ENCODE measurements at regions of chr16 and their contacts with region 1.

Region 1: DNA sequence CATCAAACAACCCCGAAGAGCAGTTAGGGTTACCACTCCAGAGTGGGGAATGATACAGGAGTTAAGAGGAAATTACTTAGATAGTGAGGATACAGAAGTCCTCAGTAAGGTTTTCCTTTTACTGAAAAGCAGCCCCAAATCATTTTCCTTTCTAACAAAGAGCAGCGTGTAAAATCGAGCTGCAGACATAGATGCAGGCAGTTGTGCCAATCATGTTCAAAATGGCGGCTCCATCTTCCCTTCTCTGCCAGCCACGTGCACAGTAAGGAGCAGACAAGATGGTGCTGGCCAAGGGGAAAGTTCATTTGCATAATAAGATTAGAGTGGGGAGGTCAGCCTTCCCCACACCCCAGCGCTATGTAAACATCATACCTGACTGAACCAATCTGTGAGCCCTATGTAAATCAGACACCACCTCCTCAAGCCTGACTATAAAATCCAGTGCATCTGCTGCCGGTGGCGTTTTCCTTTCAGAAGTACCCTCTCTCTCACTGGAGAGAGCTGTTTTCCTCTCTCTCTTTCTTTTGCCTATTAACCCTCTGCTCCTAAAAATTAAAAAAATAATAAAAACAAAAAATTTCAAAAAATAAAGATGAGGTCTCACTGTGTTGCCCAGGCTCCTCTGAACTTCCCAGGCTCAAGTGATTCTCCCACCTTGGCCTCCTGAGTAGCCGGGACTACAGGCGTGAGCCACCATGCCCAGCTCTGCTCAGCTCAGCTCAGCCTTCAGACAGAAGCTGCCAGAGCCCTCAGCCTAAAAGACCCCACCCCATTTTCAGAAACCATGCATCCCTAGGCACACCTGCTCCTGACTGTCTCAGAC is 2.6 kb upstream of the SRL start:
- DNase-seq: no peak
- H3K4me3 ChIP-seq: no peak overlapping the region
- H3K27ac ChIP-seq: no peak overlapping the region
- H3K4me1 ChIP-seq: no peaks in the 10 kb centered on the region
- H3K27me3 ChIP-seq: no peaks in the 10 kb centered on the region
- CTCF ChIP-seq: no peak
- EP300 ChIP-seq: no peak
- POLR2A ChIP-seq: no peak

Region 2: DNA sequence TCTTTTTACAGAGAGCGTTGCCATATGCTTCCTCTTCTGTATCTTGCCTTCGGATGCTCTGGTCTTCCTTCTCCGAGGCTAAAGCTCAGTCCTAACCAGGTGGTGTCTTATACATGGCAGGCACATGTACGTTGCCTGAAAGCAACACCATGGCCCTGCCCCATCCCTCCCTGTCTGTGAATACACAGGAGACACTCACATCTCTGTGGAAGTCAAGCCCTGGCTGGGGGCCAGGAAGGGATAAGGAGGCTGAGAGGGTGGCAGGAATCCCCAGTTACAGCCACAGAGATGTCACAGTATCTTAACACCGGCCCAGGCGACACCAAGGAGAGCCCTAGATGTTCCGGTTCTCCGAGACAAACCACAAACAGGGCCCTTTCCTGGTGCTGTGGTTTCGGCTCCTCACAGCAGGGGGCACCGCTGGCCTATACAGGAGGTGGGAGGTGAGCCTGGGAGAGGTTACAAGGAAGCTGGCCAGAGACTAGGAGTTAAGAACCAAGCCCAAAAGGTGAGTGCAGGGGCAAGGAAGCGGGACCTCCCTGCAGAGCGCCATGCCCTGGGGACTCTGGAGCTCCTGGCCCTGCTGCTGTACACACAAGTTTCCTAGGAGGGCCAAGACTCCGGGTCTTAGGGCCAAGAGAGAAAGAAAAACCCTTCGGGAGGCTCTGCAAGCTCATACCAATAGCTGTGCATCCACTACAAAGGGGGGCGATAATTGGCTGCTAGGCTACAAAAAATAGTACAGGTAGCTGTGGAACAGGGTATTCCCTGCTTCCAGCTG is 44.3 kb before region 1 on chr16:
- intact Hi-C with region 1: loop called in 2 of 4 experiments (anchors 5 to 10 kb)
- DNase-seq: peak; percentile 73 to 84 (median 75)
- H3K4me3 ChIP-seq: no peak overlapping the region
- H3K27ac ChIP-seq: no peak overlapping the region
- H3K4me1 ChIP-seq: peaks cover 3% of the 10 kb centered on the region
- H3K27me3 ChIP-seq: no peaks in the 10 kb centered on the region
- CTCF ChIP-seq: peak; percentile 46 to 76 (median 68)
- EP300 ChIP-seq: no peak
- POLR2A ChIP-seq: no peak

Region 3: GRCh38 chr16:4208341-4208751 is 36.1 kb before region 1 on chr16:
- intact Hi-C with region 1: loop called in 1 of 4 experiments (anchors 5 kb)
- DNase-seq: peak; percentile 57 to 82 (median 65)
- H3K4me3 ChIP-seq: no peak overlapping the region
- H3K27ac ChIP-seq: no peak overlapping the region
- H3K4me1 ChIP-seq: peaks cover 4% of the 10 kb centered on the region
- H3K27me3 ChIP-seq: no peaks in the 10 kb centered on the region
- CTCF ChIP-seq: no peak
- EP300 ChIP-seq: no peak
- POLR2A ChIP-seq: no peak

Region 4: DNA sequence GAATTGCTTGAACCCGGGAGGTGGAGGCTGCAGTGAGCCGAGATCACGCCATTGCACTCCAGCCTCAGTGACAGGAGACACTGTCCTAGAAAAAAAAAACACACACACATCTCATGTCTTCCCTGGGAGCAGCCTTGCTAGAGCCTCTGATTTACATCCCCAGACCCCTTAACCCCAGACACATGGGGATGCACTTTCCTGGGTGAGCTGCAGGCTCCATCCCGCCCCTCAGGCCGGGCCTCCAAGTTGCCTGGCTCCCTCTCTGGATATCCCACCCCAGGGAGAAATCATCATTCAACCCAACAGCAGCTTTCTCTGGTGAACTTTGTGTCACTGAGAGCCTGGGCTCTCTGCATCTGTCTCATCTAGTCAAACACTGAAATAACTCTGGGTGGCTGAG is 24.1 kb before region 1 on chr16:
- intact Hi-C with region 1: no loop called
- DNase-seq: no peak
- H3K4me3 ChIP-seq: no peak overlapping the region
- H3K27ac ChIP-seq: no peak overlapping the region
- H3K4me1 ChIP-seq: peaks cover 9% of the 10 kb centered on the region
- H3K27me3 ChIP-seq: no peaks in the 10 kb centered on the region
- CTCF ChIP-seq: no peak
- EP300 ChIP-seq: no peak
- POLR2A ChIP-seq: no peak

Region 5: DNA sequence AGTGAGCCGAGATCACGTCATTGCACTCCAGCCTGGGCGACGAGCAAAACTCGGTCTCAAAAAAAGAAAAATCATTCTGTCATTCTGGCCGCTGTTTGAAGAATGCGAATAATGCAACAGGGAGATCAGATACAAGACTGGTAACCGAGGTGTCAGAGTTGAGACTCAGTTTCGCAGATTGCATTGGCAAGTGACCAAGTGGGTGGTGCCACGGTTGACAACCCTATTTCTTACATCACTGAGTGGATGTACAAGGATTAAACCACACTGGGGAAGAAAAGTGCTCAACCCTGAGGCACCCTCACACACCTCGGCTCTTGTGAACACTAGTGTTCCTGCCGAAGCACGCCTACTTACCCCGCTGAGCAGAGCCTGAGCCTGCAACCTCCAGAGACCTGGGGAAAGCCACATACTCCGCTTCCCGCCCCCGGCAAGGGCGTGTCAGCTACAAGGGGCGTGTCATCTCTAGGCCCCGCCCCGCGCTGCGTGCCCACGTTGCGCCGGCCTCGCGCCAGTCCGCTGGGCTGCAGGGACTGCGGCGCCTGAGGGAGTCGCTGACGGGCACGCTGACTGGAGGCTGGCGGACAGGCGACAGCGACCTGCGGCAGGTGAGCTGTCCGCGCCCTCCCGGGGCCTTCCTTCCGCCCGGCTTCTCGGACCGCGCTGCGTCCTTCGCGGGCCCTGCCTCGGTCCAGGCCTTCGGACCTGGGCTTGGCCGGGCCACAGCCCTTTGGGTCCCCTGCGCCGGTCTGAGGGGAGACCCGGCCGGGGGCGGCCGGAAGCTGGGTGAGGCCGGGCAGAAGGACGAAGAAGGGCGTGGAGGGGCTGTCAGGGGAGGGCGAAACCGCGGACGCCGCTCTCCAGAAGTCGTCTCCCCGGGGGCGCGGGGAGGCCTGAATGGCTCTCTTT is 231.7 kb after region 1 on chr16 and contains the start of gene HMOX2:
- intact Hi-C with region 1: no loop called
- DNase-seq: peak; percentile 88 to 96 (median 92)
- H3K4me3 ChIP-seq: peak within 1 kb of the TSS; percentile 87
- H3K27ac ChIP-seq: peak within 1 kb of the TSS; percentile 5 to 34
- H3K4me1 ChIP-seq: peaks cover 10% of the 10 kb centered on the region
- H3K27me3 ChIP-seq: no peaks in the 10 kb centered on the region
- CTCF ChIP-seq: peak in 1 of 3 donors; percentile 41
- EP300 ChIP-seq: no peak
- POLR2A ChIP-seq: peak; percentile 19
- total RNA-seq, gene HMOX2: 25.0 to 40.5 (median 31.6) TPM